Naive thymus-derived CD4-positive, alpha-beta T cell (primary cell): ENCODE measurements at regions of chr14 and their contacts with region 1.

Region 1: DNA sequence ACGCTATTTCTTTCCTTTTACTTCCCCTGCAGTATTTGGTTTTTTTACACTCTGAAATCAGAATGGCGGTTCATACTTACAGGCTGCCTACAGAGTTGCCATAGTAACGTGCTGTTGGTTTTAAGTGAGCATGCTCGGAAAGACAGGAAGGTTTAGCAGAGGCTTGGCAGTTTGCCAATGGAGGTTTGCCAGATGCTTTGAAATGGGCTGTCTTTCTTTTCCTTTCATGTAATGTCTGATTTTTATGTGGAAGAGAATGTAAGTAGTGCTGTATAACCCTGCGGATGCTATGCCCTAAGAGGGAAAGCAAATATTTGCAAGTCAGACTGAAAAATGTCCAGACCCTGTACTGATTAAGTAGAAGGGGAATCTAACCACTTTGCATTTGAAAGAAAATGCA is 32.8 kb downstream of the ARID4A start:
- DNase-seq: peak; percentile 61 to 98 (median 95)
- ATAC-seq: peak; percentile 97
- H3K4me3 ChIP-seq: peak overlapping the region; percentile 17
- H3K4me3 Mint-ChIP-seq: peak overlapping the region; percentile 38 to 85 (median 76)
- H3K27ac ChIP-seq: peak overlapping the region; percentile 72
- H3K27ac Mint-ChIP-seq: peak overlapping the region; percentile 84 to 97 (median 94)
- H3K4me1 ChIP-seq: peaks cover 5 to 9% of the 10 kb centered on the region in 2 donors
- H3K4me1 Mint-ChIP-seq: peaks cover 17 to 42% (median 32%) of the 10 kb centered on the region in 7 donors
- H3K27me3 ChIP-seq: no peaks in the 10 kb centered on the region
- H3K27me3 Mint-ChIP-seq: no peaks in the 10 kb centered on the region

Region 2: GRCh38 chr14:58239244-58240195 is 91.6 kb before region 1 on chr14:
- CTCF ChIA-PET with region 1: interaction called, 3 read pairs
- POLR2A ChIA-PET with region 1: no interaction called
- intact Hi-C with region 1: loop called (anchors 1 kb)
- DNase-seq: peak; percentile 66 to 89 (median 84)
- ATAC-seq: peak; percentile 39
- H3K4me3 ChIP-seq: peak overlapping the region; percentile 78
- H3K4me3 Mint-ChIP-seq: no peak overlapping the region
- H3K27ac ChIP-seq: peak overlapping the region; percentile 75
- H3K27ac Mint-ChIP-seq: no peak overlapping the region
- H3K4me1 ChIP-seq: peaks cover 8 to 9% of the 10 kb centered on the region in 2 donors
- H3K4me1 Mint-ChIP-seq: peaks cover 11 to 30% (median 27%) of the 10 kb centered on the region in 7 donors
- H3K27me3 ChIP-seq: no peaks in the 10 kb centered on the region
- H3K27me3 Mint-ChIP-seq: peaks cover 0 to 2% (median 0%) of the 10 kb centered on the region in 5 donors

Region 3: GRCh38 chr14:58341152-58341748 is 10.1 kb after region 1 on chr14:
- CTCF ChIA-PET with region 1: no interaction called
- POLR2A ChIA-PET with region 1: no interaction called
- intact Hi-C with region 1: loop called in 1 of 2 experiments (anchors 2 kb)
- DNase-seq: no peak
- ATAC-seq: no peak
- H3K4me3 ChIP-seq: no peak overlapping the region
- H3K4me3 Mint-ChIP-seq: no peak overlapping the region
- H3K27ac ChIP-seq: no peak overlapping the region
- H3K27ac Mint-ChIP-seq: peak overlapping the region in 3 of 9 donors; percentile 3 to 62 (median 59)
- H3K4me1 ChIP-seq: no peaks in the 10 kb centered on the region
- H3K4me1 Mint-ChIP-seq: peaks cover 0 to 17% (median 8%) of the 10 kb centered on the region in 7 donors
- H3K27me3 ChIP-seq: no peaks in the 10 kb centered on the region
- H3K27me3 Mint-ChIP-seq: no peaks in the 10 kb centered on the region

Region 4: DNA sequence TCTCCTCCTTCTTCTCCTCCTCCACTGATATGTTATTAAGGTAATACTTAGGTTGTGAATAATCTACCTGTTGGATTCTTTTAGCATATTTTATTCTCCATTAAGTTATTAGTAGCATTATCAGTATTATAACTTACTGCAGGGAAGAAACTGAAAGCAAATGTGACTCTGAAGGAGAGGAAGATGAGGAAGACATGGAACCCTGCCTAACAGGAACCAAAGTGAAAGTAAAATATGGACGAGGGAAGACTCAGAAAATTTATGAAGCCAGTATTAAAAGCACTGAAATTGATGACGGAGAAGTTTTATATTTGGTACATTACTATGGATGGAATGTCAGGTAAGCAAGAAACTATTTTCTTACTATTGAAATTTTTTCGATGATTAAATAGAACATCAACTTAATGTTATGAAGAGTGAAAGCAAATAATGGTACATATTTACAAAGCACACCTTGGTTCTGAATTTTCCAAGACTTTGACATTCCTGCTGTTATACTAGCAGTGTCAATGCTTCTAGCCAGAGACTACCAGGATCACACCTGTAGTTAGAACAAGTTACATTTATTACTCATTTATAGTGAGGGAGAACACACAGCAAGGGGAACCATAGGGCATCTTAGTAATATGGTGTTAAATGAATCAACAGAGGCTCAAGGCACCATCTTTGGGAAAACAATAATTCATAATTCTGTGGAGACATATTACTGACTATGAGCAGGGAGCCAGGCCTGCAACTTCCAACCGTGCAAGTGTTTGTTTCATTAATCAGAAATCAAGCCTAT is 22.6 kb after region 1 on chr14:
- CTCF ChIA-PET with region 1: no interaction called
- POLR2A ChIA-PET with region 1: no interaction called
- intact Hi-C with region 1: loop called in 1 of 2 experiments (anchors 2 kb)
- DNase-seq: no peak
- ATAC-seq: peak; percentile 34
- H3K4me3 ChIP-seq: peak overlapping the region; percentile 15
- H3K4me3 Mint-ChIP-seq: peak overlapping the region; percentile 39 to 85 (median 70)
- H3K27ac ChIP-seq: peak overlapping the region; percentile 57
- H3K27ac Mint-ChIP-seq: peak overlapping the region; percentile 33 to 89 (median 71)
- H3K4me1 ChIP-seq: peaks cover 0 to 10% of the 10 kb centered on the region in 2 donors
- H3K4me1 Mint-ChIP-seq: peaks cover 13 to 50% (median 39%) of the 10 kb centered on the region in 7 donors
- H3K27me3 ChIP-seq: no peaks in the 10 kb centered on the region
- H3K27me3 Mint-ChIP-seq: no peaks in the 10 kb centered on the region

Region 5: GRCh38 chr14:58368956-58369355 is 37.8 kb after region 1 on chr14:
- CTCF ChIA-PET with region 1: no interaction called
- POLR2A ChIA-PET with region 1: no interaction called
- intact Hi-C with region 1: no loop called
- DNase-seq: no peak
- ATAC-seq: no peak
- H3K4me3 ChIP-seq: no peak overlapping the region
- H3K4me3 Mint-ChIP-seq: no peak overlapping the region
- H3K27ac ChIP-seq: no peak overlapping the region
- H3K27ac Mint-ChIP-seq: peak overlapping the region in 1 of 9 donors; percentile 9
- H3K4me1 ChIP-seq: no peaks in the 10 kb centered on the region
- H3K4me1 Mint-ChIP-seq: peaks cover 0 to 6% (median 0%) of the 10 kb centered on the region in 7 donors
- H3K27me3 ChIP-seq: no peaks in the 10 kb centered on the region
- H3K27me3 Mint-ChIP-seq: no peaks in the 10 kb centered on the region

Region 6: GRCh38 chr14:58395812-58396788 is 65.0 kb after region 1 on chr14 and contains the start of gene TOMM20L:
- CTCF ChIA-PET with region 1: no interaction called
- POLR2A ChIA-PET with region 1: no interaction called
- intact Hi-C with region 1: loop called in 1 of 2 experiments (anchors 1 kb)
- DNase-seq: peak; percentile 54 to 84 (median 72)
- ATAC-seq: peak; percentile 92
- H3K4me3 ChIP-seq: peak within 1 kb of the TSS; percentile 33
- H3K4me3 Mint-ChIP-seq: peak within 1 kb of the TSS; percentile 78 to 93 (median 86)
- H3K27ac ChIP-seq: peak within 1 kb of the TSS; percentile 72
- H3K27ac Mint-ChIP-seq: peak within 1 kb of the TSS; percentile 66 to 97 (median 95)
- H3K4me1 ChIP-seq: peaks cover 8 to 9% of the 10 kb centered on the region in 2 donors
- H3K4me1 Mint-ChIP-seq: peaks cover 6 to 19% (median 12%) of the 10 kb centered on the region in 7 donors
- H3K27me3 ChIP-seq: no peaks in the 10 kb centered on the region
- H3K27me3 Mint-ChIP-seq: peaks cover 0 to 2% (median 0%) of the 10 kb centered on the region in 5 donors
- total RNA-seq, gene TOMM20L: not detected

Region 7: GRCh38 chr14:58533446-58533845 is 202.3 kb after region 1 on chr14:
- CTCF ChIA-PET with region 1: no interaction called
- POLR2A ChIA-PET with region 1: no interaction called
- intact Hi-C with region 1: no loop called
- DNase-seq: no peak
- ATAC-seq: no peak
- H3K4me3 ChIP-seq: no peak overlapping the region
- H3K4me3 Mint-ChIP-seq: no peak overlapping the region
- H3K27ac ChIP-seq: no peak overlapping the region
- H3K27ac Mint-ChIP-seq: peak overlapping the region in 8 of 9 donors; percentile 29 to 80 (median 66)
- H3K4me1 ChIP-seq: no peaks in the 10 kb centered on the region
- H3K4me1 Mint-ChIP-seq: peaks cover under 1 to 34% (median 18%) of the 10 kb centered on the region in 7 donors
- H3K27me3 ChIP-seq: no peaks in the 10 kb centered on the region
- H3K27me3 Mint-ChIP-seq: no peaks in the 10 kb centered on the region